Aorta (tissue), 5 donors: ENCODE measurements at regions of chr2 and their contacts with region 1.

Region 1: GRCh38 chr2:231411831-231412617 is 16.5 kb downstream of the B3GNT7 start:
- DNase-seq: peak; percentile 93 to 95
- ATAC-seq: peak; percentile 98
- H3K4me3 ChIP-seq: peak overlapping the region; percentile 28 to 41
- H3K27ac ChIP-seq: no peak overlapping the region
- H3K4me1 ChIP-seq: peaks cover 0 to 2% of the 10 kb centered on the region in 2 donors
- H3K27me3 ChIP-seq: no peaks in the 10 kb centered on the region

Region 2: DNA sequence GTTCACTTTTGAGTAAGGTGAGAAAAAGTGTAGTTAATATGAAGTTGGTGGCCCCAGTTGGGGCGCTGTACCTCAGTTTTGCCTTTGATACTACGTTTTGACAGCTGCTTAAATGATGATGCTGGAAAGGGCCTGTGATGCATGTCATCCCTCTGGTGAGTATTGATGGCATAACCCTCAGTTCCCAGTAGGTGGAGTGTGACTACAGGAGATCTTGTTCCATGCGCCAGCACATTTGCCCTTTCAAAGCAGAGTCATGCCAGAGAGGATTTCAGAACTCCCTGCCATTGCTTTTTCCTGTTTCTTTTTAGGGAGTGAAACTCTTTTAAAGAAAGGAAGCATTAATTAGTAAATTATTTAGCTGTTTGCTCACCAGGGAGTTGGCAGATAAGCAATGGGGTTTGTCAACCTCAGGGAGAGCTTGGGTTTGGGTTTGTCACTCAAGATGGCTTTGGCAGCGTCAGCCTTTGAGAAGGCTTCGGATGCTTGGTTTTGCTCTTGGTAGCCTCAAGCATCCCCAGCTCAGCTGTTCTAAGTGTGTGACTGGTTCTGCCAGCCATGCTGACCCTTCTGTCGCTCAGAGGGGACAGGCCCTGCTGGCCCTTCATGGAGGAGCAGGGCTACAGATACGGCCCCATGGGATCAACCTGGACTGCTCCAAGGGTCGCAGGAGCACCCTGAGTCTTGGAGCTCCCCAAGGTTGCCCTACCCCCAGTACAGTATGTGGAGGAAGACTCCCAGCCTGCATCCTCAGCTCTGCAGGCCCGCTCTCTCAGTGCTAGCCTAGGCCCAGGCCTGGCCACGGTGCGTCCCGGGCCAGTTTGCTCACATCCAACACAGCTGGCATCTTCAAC is 184.5 kb before region 1 on chr2:
- intact Hi-C with region 1: loop called (anchors 5 to 10 kb)
- DNase-seq: peak in 1 of 2 donors; percentile 61
- ATAC-seq: peak; percentile 90
- H3K4me3 ChIP-seq: no peak overlapping the region
- H3K27ac ChIP-seq: peak overlapping the region in 1 of 2 donors; percentile 60
- H3K4me1 ChIP-seq: peaks cover 0 to 2% of the 10 kb centered on the region in 2 donors
- H3K27me3 ChIP-seq: no peaks in the 10 kb centered on the region

Region 3: GRCh38 chr2:231297108-231297908 is 114.7 kb before region 1 on chr2:
- intact Hi-C with region 1: loop called (anchors 5 to 10 kb)
- DNase-seq: peak in 1 of 2 donors; percentile 73
- ATAC-seq: peak; percentile 61
- H3K4me3 ChIP-seq: no peak overlapping the region
- H3K27ac ChIP-seq: no peak overlapping the region
- H3K4me1 ChIP-seq: no peaks in the 10 kb centered on the region
- H3K27me3 ChIP-seq: no peaks in the 10 kb centered on the region

Region 4: DNA sequence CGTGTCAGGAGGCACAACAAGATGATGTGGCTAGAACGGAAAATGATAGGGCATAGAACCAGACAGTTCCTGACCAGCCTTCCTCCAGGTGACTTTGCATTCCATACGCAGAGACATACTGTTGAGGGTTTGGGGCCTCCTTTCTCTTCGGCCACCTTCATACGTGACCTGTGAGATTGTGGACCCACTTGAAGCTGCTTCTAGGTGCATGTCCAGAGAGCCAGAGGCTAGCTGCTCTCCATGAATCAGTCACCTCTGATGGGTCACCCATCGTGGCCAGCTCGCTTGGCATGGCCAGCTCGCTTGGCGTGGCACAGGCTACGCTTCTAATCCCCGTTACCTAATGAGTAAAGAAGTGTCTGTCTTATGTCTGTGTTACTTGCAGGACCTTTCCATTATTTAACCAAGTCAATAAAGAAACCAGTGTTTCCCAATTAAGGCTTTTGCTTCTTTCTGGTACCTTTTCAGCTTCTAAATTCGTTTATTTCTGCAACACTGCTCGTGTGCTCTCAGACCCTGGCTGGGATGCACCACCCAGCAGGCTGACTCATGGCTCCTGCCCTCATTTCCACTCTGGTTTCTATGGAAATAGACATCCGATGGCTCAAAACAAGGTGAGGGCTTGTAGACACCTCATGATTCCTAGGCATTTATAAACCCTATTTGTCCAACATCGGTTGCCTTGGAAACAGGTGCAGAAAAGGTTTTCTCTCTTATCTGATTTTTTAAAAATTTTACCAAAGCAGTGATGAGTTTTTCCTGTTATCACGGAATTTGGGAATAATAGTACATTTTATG is 103.2 kb before region 1 on chr2:
- intact Hi-C with region 1: loop called (anchors 5 to 10 kb)
- DNase-seq: no peak
- ATAC-seq: no peak
- H3K4me3 ChIP-seq: no peak overlapping the region
- H3K27ac ChIP-seq: no peak overlapping the region
- H3K4me1 ChIP-seq: peaks cover 0 to 2% of the 10 kb centered on the region in 2 donors
- H3K27me3 ChIP-seq: no peaks in the 10 kb centered on the region

Region 5: GRCh38 chr2:231469583-231469950 is 57.5 kb after region 1 on chr2:
- intact Hi-C with region 1: no loop called
- DNase-seq: peak in 1 of 2 donors; percentile 14
- ATAC-seq: no peak
- H3K4me3 ChIP-seq: no peak overlapping the region
- H3K27ac ChIP-seq: no peak overlapping the region
- H3K4me1 ChIP-seq: no peaks in the 10 kb centered on the region
- H3K27me3 ChIP-seq: no peaks in the 10 kb centered on the region